Vagina (tissue), 2 donors: ENCODE measurements at regions of chr16 and their contacts with region 1.

Region 1: DNA sequence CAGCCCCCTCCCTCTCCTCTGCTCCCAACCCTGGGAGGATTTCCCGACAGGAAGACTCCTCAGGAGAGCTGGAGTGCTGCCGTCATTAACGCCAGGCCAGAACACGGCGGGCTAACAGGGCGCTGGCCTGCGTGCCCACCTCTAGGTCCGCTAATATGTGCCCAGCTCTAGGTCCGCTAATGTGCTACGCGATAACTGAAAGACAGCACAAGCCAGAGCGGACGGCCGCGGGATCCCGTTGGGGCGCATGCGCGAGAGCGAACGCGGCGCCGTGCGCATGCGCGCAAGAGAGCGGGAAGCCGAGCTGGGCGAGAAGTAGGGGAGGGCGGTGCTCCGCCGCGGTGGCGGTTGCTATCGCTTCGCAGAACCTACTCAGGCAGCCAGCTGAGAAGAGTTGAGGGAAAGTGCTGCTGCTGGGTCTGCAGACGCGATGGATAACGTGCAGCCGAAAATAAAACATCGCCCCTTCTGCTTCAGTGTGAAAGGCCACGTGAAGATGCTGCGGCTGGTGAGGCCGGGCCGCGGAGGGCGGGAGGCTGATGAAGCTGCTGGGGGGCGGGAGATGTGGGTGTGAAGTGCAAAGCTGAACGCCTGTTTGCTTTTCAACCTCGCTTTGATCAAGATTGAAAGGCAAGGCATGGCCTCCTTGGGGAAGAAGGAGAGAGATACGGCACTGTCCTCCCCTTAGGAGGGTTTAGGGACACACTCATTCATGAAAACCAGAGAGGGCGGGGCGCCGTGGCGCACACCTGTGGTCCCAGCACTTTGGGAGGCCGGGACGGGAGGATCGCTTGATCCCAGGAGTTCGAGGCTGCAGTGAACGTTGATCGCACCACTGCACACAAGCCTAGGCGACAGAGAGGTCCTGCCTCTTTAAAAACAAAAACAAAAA is at the start of gene CKLF:
- DNase-seq: peak in 1 of 2 donors; percentile 91
- H3K4me3 ChIP-seq: peak within 1 kb of the TSS; percentile 58 to 64
- H3K27ac ChIP-seq: peak within 1 kb of the TSS; percentile 89
- H3K4me1 ChIP-seq: peaks cover 60% of the 10 kb centered on the region
- H3K27me3 ChIP-seq: no peaks in the 10 kb centered on the region
- CTCF ChIP-seq: no peak
- POLR2A ChIP-seq: peak in 1 of 2 donors; percentile 71
- total RNA-seq, gene CKLF: 52.3 TPM

Region 2: GRCh38 chr16:66508261-66508913 is 44.1 kb before region 1 on chr16:
- intact Hi-C with region 1: loop called (anchors 10 kb)
- DNase-seq: no peak
- H3K4me3 ChIP-seq: no peak overlapping the region
- H3K27ac ChIP-seq: no peak overlapping the region
- H3K4me1 ChIP-seq: peaks cover 53% of the 10 kb centered on the region
- H3K27me3 ChIP-seq: no peaks in the 10 kb centered on the region
- CTCF ChIP-seq: no peak
- POLR2A ChIP-seq: no peak

Region 3: GRCh38 chr16:66580605-66581209 is 28.2 kb after region 1 on chr16:
- intact Hi-C with region 1: loop called (anchors 2 kb)
- DNase-seq: no peak
- H3K4me3 ChIP-seq: no peak overlapping the region
- H3K27ac ChIP-seq: no peak overlapping the region
- H3K4me1 ChIP-seq: peaks cover 17% of the 10 kb centered on the region
- H3K27me3 ChIP-seq: no peaks in the 10 kb centered on the region
- CTCF ChIP-seq: no peak
- POLR2A ChIP-seq: no peak